CD8-positive, alpha-beta T cell (primary cell): ENCODE measurements at regions of chr6 and their contacts with region 1.

Region 1: DNA sequence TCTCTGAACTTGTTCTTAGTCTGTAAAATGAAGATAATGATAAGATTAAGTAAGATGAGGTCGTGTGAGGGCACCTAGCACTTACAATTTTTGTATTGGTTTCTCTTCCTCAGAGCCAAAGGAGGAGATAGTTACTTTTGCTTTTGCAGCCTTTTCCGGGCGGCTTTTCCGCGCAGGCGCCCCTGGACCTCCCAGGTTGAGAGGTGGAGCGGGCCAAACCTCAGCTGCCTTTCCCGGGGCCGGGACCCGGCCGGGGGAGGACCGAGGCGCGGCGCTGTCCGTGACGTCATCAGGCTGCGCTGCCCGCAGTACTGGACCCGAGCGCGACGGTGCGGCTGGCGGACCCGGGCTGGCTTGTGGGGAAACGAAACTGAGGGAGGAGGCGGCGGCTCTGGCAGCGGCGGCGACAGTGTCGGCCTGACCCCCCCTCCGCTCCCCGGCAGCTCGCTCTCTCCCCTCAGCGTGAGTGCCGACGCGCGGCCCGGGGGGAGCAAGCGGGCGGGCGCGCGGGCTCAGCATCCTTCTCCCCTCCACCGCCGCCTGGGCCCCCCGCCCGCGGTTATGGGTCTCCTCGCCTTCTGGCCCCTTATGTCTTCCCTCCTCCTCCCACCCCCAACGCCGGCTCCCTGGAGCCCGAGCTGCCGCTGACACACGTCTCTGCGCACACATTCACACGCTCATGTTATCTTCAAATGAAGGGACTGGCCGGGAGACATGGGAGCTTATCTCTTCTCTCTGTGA is at the start of gene CMTR1:
- DNase-seq: peak; percentile 93 to 98 (median 97)
- ATAC-seq: peak; percentile 85
- H3K4me3 ChIP-seq: peak within 1 kb of the TSS; percentile 71 to 79
- H3K4me3 Mint-ChIP-seq: peak within 1 kb of the TSS; percentile 94
- H3K27ac ChIP-seq: peak within 1 kb of the TSS; percentile 84 to 90
- H3K27ac Mint-ChIP-seq: peak within 1 kb of the TSS; percentile 97
- H3K4me1 ChIP-seq: peaks cover 9% of the 10 kb centered on the region
- H3K4me1 Mint-ChIP-seq: peaks cover 41% of the 10 kb centered on the region
- H3K27me3 ChIP-seq: no peaks in the 10 kb centered on the region
- H3K27me3 Mint-ChIP-seq: peaks cover 7% of the 10 kb centered on the region
- CTCF ChIP-seq: no peak
- total RNA-seq, gene CMTR1: 74.8 to 79.5 TPM

Region 2: DNA sequence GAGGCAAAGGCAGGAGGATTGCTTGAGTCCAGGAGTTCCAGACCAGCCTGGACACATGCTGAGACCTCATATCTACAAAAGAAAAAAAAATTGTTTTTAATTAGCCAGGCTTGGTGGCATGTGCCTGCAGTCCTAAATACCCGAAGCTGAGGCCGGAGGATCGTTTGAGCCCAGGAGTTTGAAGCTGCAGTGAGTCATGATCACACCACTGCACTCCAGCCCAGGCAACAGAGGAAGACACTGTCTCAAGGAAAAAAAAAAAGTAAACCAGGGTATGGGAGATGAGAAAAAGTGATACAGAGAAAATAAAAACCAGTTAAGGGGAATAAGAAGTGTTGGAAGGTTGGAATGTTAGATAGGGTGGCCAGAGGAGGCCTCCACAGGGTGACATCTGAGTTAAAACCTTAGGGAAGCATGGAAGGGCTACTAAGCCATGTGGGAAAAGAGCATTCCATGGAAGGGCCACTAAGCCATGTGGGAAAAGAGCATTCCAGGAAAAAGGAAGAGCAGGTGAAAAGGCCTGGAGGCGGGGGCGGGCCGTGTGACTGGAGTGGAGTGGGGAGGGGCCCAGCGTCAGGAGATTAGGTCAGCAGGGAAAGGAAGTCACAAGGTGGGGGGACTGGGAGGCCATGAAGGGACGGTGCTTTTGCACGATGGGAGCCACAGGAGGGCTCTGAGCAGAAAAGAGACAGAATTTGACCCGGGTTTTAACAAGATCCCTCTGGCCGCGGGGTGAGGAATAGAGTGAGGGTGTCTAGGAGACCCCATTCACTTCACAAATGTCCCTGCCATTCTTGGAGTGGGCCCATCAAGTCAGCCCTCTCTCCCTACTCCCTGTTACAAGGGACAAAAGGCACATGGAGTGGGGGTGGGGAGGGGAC is 612.1 kb before region 1 on chr6:
- CTCF ChIA-PET with region 1: no interaction called
- POLR2A ChIA-PET with region 1: no interaction called
- intact Hi-C with region 1: no loop called
- DNase-seq: no peak
- ATAC-seq: no peak
- H3K4me3 ChIP-seq: no peak overlapping the region
- H3K4me3 Mint-ChIP-seq: no peak overlapping the region
- H3K27ac ChIP-seq: no peak overlapping the region
- H3K27ac Mint-ChIP-seq: no peak overlapping the region
- H3K4me1 ChIP-seq: no peaks in the 10 kb centered on the region
- H3K4me1 Mint-ChIP-seq: no peaks in the 10 kb centered on the region
- H3K27me3 ChIP-seq: no peaks in the 10 kb centered on the region
- H3K27me3 Mint-ChIP-seq: no peaks in the 10 kb centered on the region
- CTCF ChIP-seq: no peak

Region 3: DNA sequence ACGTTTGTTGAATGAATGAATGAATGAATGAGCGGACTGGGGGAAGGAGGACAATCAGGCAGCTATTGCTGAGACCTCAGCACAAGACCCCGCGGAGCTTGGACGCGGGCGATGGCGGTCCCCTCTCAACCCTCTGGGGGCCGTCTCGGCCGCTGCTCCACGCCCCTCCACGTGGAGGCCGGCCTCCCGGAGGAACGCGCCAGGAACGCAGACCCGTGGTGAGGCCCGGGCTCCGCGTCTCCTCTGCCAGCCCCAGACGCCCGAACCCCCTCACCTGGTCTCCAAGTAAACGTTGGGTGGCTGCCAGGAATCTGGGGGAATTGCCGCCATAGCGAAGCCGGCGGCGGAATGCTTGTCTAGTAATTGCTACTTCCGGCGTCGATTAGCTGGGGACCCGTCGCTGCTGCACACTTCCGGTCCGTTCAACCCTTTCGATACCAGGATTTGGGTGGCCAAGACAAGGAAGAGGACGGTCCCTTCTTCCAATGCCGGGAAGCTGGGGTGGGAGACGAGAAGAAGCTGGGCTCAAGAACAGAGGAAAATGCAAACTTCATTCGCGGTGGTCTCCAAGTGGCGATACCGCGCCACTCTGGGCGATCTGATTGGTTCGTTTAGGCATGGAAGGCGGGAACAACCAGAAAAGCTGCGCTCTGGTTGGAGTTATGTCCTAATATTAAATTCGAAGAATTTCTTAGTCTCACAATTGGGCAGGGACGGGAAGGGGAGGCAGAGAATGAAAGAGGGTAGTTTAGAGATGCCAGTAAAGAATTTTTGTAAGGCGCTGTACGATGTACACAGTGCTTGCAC is 558.4 kb before region 1 on chr6 and contains the start of gene PPIL1:
- CTCF ChIA-PET with region 1: no interaction called
- POLR2A ChIA-PET with region 1: no interaction called
- intact Hi-C with region 1: loop called in 1 of 2 experiments (anchors 10 kb)
- DNase-seq: peak; percentile 72 to 92 (median 85)
- ATAC-seq: peak; percentile 90
- H3K4me3 ChIP-seq: peak within 1 kb of the TSS; percentile 88 to 92
- H3K4me3 Mint-ChIP-seq: peak within 1 kb of the TSS; percentile 100
- H3K27ac ChIP-seq: peak within 1 kb of the TSS; percentile 82 to 87
- H3K27ac Mint-ChIP-seq: peak within 1 kb of the TSS; percentile 100
- H3K4me1 ChIP-seq: peaks cover 16% of the 10 kb centered on the region
- H3K4me1 Mint-ChIP-seq: peaks cover 48% of the 10 kb centered on the region
- H3K27me3 ChIP-seq: peaks cover 0 to 6% of the 10 kb centered on the region in 2 experiments
- H3K27me3 Mint-ChIP-seq: peaks cover 16% of the 10 kb centered on the region
- CTCF ChIP-seq: no peak
- total RNA-seq, gene PPIL1: 2.4 TPM

Region 4: GRCh38 chr6:37257634-37258404 is 175.3 kb before region 1 on chr6 and contains the starts of genes TBC1D22B and TMEM217:
- CTCF ChIA-PET with region 1: no interaction called
- POLR2A ChIA-PET with region 1: no interaction called
- intact Hi-C with region 1: loop called in 1 of 2 experiments (anchors 5 kb)
- DNase-seq: peak; percentile 89 to 97 (median 95)
- ATAC-seq: peak; percentile 99
- H3K4me3 ChIP-seq: peak within 1 kb of the TSS; percentile 93 to 100
- H3K4me3 Mint-ChIP-seq: peak within 1 kb of the TSS; percentile 92
- H3K27ac ChIP-seq: peak within 1 kb of the TSS; percentile 74 to 94
- H3K27ac Mint-ChIP-seq: peak within 1 kb of the TSS; percentile 85
- H3K4me1 ChIP-seq: peaks cover 24% of the 10 kb centered on the region
- H3K4me1 Mint-ChIP-seq: peaks cover 40% of the 10 kb centered on the region
- H3K27me3 ChIP-seq: no peaks in the 10 kb centered on the region
- H3K27me3 Mint-ChIP-seq: no peaks in the 10 kb centered on the region
- CTCF ChIP-seq: no peak
- total RNA-seq, gene TBC1D22B: 6.7 to 6.8 TPM
- total RNA-seq, gene TMEM217: 0.27 to 1.2 TPM

Region 5: GRCh38 chr6:37499433-37500293 is 66.6 kb after region 1 on chr6 and contains the start of gene CCDC167:
- CTCF ChIA-PET with region 1: no interaction called
- POLR2A ChIA-PET with region 1: interaction called, 4 read pairs
- intact Hi-C with region 1: loop called (anchors 5 kb)
- DNase-seq: peak; percentile 90 to 98 (median 96)
- ATAC-seq: peak; percentile 69
- H3K4me3 ChIP-seq: peak within 1 kb of the TSS; percentile 86 to 94
- H3K4me3 Mint-ChIP-seq: peak within 1 kb of the TSS; percentile 98
- H3K27ac ChIP-seq: peak within 1 kb of the TSS; percentile 59 to 77
- H3K27ac Mint-ChIP-seq: peak within 1 kb of the TSS; percentile 96
- H3K4me1 ChIP-seq: peaks cover 64% of the 10 kb centered on the region
- H3K4me1 Mint-ChIP-seq: peaks cover 74% of the 10 kb centered on the region
- H3K27me3 ChIP-seq: no peaks in the 10 kb centered on the region
- H3K27me3 Mint-ChIP-seq: no peaks in the 10 kb centered on the region
- CTCF ChIP-seq: no peak
- total RNA-seq, gene CCDC167: 5.4 to 6.2 TPM

Region 6: GRCh38 chr6:37698261-37699137 is 265.4 kb after region 1 on chr6:
- CTCF ChIA-PET with region 1: no interaction called
- POLR2A ChIA-PET with region 1: interaction called, 5 read pairs
- intact Hi-C with region 1: loop called (anchors 2 kb)
- DNase-seq: peak; percentile 31 to 86 (median 67)
- ATAC-seq: peak; percentile 29
- H3K4me3 ChIP-seq: peak overlapping the region; percentile 80 to 84
- H3K4me3 Mint-ChIP-seq: peak overlapping the region; percentile 99
- H3K27ac ChIP-seq: peak overlapping the region in 1 of 2 experiments; percentile 85
- H3K27ac Mint-ChIP-seq: peak overlapping the region; percentile 97
- H3K4me1 ChIP-seq: peaks cover 11% of the 10 kb centered on the region
- H3K4me1 Mint-ChIP-seq: peaks cover 18% of the 10 kb centered on the region
- H3K27me3 ChIP-seq: peaks cover 9 to 25% of the 10 kb centered on the region in 2 experiments
- H3K27me3 Mint-ChIP-seq: peaks cover 31% of the 10 kb centered on the region
- CTCF ChIP-seq: no peak

Region 7: GRCh38 chr6:38702558-38703397 is 1269.7 kb after region 1 on chr6 and contains the start of gene GLO1:
- CTCF ChIA-PET with region 1: no interaction called
- POLR2A ChIA-PET with region 1: no interaction called
- intact Hi-C with region 1: loop called in 1 of 2 experiments (anchors 5 kb)
- DNase-seq: peak; percentile 91 to 98 (median 96)
- ATAC-seq: peak; percentile 99
- H3K4me3 ChIP-seq: peak within 1 kb of the TSS; percentile 64 to 88
- H3K4me3 Mint-ChIP-seq: peak within 1 kb of the TSS; percentile 83
- H3K27ac ChIP-seq: peak within 1 kb of the TSS; percentile 78 to 90
- H3K27ac Mint-ChIP-seq: peak within 1 kb of the TSS; percentile 92
- H3K4me1 ChIP-seq: no peaks in the 10 kb centered on the region
- H3K4me1 Mint-ChIP-seq: peaks cover 24% of the 10 kb centered on the region
- H3K27me3 ChIP-seq: no peaks in the 10 kb centered on the region
- H3K27me3 Mint-ChIP-seq: peaks cover 6% of the 10 kb centered on the region
- CTCF ChIP-seq: no peak
- total RNA-seq, gene GLO1: 23.1 to 23.9 TPM